ENCODE measurements at regions of chr10 and their contacts with region 1.

Region 1: DNA sequence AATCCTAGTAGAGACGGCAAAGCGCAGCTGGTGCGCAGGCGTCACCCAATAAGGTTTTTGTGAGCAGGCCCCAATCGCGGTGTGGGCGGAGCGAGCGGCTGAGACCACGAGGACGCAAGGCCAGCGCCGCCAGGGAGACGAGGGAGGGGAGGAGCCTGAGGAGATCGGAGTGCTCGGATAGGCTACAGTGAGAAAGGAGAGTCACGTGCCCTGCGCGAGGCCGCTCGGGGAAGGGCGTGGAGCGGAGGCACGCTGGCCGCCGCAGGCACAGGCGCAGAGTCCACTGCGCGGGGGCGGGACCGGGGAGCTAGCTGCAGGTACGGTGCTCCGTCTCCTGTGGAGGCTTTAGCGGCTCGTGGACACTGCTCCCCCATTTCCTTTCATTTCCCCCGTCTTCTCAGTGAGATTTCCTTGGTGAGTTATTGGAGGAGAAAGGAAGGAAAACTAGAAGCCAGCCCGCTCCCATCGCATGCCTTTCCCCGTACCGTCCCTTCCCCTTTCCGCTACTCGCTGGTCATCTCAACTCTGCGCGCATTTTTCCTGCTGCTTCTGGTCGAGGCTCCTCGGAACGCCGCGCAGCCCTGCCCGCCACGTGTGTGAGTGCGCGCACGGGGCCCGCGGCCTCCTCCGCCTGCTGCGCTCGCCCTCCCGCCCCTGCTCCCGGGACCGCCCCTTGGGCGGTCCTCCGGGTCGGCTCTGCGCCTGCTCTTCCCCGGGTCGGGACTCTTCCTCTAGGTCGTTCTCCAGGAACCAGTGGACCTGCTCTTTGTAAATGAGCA is at the start of gene THNSL1:
- DNase-seq: peak; percentile 99
- H3K4me3 ChIP-seq: peak within 1 kb of the TSS; percentile 72 to 79
- H3K27ac ChIP-seq: peak within 1 kb of the TSS; percentile 94 to 96
- H3K4me1 ChIP-seq: peaks cover 6% of the 10 kb centered on the region
- H3K27me3 ChIP-seq: no peaks in the 10 kb centered on the region
- CTCF ChIP-seq: no peak
- POLR2A ChIP-seq: peak; percentile 61
- total RNA-seq, gene THNSL1: 6.7 to 9.6 TPM

Region 2: DNA sequence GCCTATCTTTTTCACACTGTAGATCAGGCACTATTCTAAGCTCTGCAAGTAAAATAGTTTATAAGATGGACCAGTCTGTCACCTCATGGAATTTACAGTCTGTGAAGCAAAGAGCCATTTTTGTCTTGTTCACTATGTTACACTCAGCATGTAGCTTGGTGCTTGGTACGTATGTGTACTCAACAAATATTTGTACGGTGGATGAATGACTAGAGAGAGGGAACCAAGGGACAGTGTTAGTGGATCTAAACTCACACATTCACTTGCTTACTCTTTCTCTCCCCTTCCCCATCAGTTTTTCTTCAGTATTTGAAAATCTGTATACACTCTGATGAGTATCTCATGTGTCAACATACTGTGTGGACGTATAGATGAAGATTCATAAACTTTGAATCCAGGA is 1778.5 kb before region 1 on chr10:
- intact Hi-C with region 1: no loop called
- DNase-seq: no peak
- H3K4me3 ChIP-seq: no peak overlapping the region
- H3K27ac ChIP-seq: no peak overlapping the region
- H3K4me1 ChIP-seq: no peaks in the 10 kb centered on the region
- H3K27me3 ChIP-seq: no peaks in the 10 kb centered on the region
- CTCF ChIP-seq: no peak
- POLR2A ChIP-seq: no peak

Region 3: DNA sequence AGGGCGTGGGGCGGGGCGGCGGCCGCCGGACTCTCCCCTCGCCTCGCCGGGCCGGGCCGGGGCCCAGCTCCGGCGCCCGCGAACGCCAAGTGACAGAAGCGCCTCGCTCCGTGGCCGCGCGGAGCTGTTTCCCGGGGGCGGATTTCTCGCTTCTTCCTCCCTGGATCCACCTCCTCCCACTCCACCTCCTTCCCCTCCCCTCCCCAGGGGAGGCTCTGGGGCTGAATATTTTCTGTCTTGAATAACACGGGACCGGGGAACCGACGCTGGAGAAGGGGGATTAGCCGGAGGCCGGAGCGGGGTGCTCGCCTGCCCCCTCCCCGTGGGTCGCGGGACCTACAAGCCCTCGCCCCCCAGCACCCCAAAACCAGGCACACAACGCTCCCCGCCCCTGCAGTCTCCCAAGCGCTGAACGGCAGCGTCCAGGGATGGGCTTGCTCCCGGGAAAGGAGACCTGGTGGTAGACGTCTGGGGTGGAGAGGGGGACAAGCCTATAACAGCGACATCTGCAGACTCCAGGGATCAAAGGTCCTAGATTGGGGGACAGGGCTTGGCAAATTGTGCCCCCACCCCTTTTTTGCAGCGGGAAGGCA is 292.7 kb before region 1 on chr10 and contains the start of gene ARHGAP21:
- intact Hi-C with region 1: no loop called
- DNase-seq: peak; percentile 69
- H3K4me3 ChIP-seq: peak within 1 kb of the TSS; percentile 86 to 88
- H3K27ac ChIP-seq: peak within 1 kb of the TSS; percentile 95 to 99
- H3K4me1 ChIP-seq: peaks cover 4% of the 10 kb centered on the region
- H3K27me3 ChIP-seq: no peaks in the 10 kb centered on the region
- CTCF ChIP-seq: no peak
- POLR2A ChIP-seq: no peak
- total RNA-seq, gene ARHGAP21: 66.9 to 69.2 TPM

Region 4: GRCh38 chr10:24951201-24952142 is 65.1 kb before region 1 on chr10:
- intact Hi-C with region 1: loop called (anchors 2 kb)
- DNase-seq: peak; percentile 33
- H3K4me3 ChIP-seq: peak overlapping the region; percentile 68 to 72
- H3K27ac ChIP-seq: peak overlapping the region; percentile 41 to 80
- H3K4me1 ChIP-seq: peaks cover 6% of the 10 kb centered on the region
- H3K27me3 ChIP-seq: no peaks in the 10 kb centered on the region
- CTCF ChIP-seq: no peak
- POLR2A ChIP-seq: no peak

Region 5: GRCh38 chr10:25101461-25102146 is 85.0 kb after region 1 on chr10:
- intact Hi-C with region 1: no loop called
- DNase-seq: no peak
- H3K4me3 ChIP-seq: no peak overlapping the region
- H3K27ac ChIP-seq: no peak overlapping the region
- H3K4me1 ChIP-seq: no peaks in the 10 kb centered on the region
- H3K27me3 ChIP-seq: no peaks in the 10 kb centered on the region
- CTCF ChIP-seq: no peak
- POLR2A ChIP-seq: no peak

Region 6: DNA sequence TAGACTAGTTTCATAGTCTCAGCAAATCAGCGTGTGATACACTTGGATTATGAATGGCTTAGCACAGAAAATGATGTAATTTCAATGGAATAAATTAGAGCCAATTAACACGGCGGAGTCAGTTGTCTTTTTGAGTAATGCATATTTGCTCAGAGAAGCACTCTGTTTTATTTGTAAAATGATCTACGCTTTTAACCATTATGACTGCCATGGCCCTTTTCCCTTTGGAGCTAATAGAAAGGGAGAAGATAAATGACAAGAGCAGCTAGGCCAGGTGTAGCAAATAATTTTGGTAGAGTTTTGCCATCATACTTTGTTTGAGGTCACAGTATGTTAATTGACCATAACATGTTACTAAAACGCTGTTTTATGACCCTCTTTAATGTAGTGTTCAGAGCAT is 245.0 kb after region 1 on chr10:
- intact Hi-C with region 1: no loop called
- DNase-seq: no peak
- H3K4me3 ChIP-seq: no peak overlapping the region
- H3K27ac ChIP-seq: no peak overlapping the region
- H3K4me1 ChIP-seq: no peaks in the 10 kb centered on the region
- H3K27me3 ChIP-seq: no peaks in the 10 kb centered on the region
- CTCF ChIP-seq: no peak
- POLR2A ChIP-seq: no peak

Measured in testis (tissue), 5 donors.